BJ (cell line): ENCODE measurements at regions of chr1 and their contacts with region 1.

Region 1: GRCh38 chr1:110011527-110012041 is 22.8 kb upstream of the STRIP1 start:
- DNase-seq: no peak
- H3K4me3 ChIP-seq: no peak overlapping the region
- H3K27me3 ChIP-seq: no peaks in the 10 kb centered on the region
- CTCF ChIP-seq: peak; percentile 69

Region 2: GRCh38 chr1:109783429-109783831 is 228.2 kb before region 1 on chr1:
- CTCF ChIA-PET with region 1: interaction called, 61 read pairs
- POLR2A ChIA-PET with region 1: no interaction called
- DNase-seq: no peak
- H3K4me3 ChIP-seq: no peak overlapping the region
- H3K27me3 ChIP-seq: no peaks in the 10 kb centered on the region
- CTCF ChIP-seq: no peak

Region 3: GRCh38 chr1:109993885-109994284 is 17.7 kb before region 1 on chr1:
- CTCF ChIA-PET with region 1: interaction called, 14 read pairs
- POLR2A ChIA-PET with region 1: no interaction called
- DNase-seq: no peak
- H3K4me3 ChIP-seq: no peak overlapping the region
- H3K27me3 ChIP-seq: no peaks in the 10 kb centered on the region
- CTCF ChIP-seq: no peak